Esophagus squamous epithelium (tissue), 5 donors: ENCODE measurements at regions of chr10 and their contacts with region 1.

Region 1: DNA sequence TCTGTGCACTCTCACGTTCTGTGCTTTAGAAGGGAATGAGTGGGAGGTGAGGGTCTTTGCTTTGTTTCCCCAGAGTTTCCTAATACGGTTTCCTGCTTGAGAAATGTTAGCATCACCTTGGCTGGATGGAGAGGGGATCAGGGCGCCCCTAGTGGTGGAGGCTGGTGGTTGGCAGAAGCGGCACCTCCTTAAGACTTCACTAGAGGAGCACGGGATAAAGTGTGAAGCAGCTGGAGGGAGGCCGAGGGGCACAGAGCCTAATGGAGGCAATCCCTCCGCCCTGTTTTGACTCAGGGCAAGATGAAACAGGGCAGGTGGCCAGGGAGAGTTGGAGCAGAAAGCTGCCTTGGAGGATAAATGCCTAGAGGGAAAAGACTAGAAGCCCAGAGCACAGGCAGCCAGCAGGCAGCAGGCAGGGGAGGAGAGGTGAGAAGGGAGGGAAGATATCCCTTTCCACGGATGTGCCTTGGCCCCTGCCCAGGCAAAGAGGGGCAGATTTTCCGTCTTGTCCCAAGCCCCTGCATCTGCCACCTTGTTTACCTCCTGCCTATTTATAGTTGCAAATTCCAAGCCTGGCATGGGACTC is 56.0 kb upstream of the BTRC start:
- DNase-seq: no peak
- H3K4me3 ChIP-seq: no peak overlapping the region
- H3K27ac ChIP-seq: no peak overlapping the region
- H3K4me1 ChIP-seq: peaks cover 0 to 5% (median 0%) of the 10 kb centered on the region in 3 donors
- H3K27me3 ChIP-seq: peaks cover 0 to 90% (median 4%) of the 10 kb centered on the region in 4 donors
- CTCF ChIP-seq: peak; percentile 62 to 87 (median 80)
- POLR2A ChIP-seq: no peak

Region 2: DNA sequence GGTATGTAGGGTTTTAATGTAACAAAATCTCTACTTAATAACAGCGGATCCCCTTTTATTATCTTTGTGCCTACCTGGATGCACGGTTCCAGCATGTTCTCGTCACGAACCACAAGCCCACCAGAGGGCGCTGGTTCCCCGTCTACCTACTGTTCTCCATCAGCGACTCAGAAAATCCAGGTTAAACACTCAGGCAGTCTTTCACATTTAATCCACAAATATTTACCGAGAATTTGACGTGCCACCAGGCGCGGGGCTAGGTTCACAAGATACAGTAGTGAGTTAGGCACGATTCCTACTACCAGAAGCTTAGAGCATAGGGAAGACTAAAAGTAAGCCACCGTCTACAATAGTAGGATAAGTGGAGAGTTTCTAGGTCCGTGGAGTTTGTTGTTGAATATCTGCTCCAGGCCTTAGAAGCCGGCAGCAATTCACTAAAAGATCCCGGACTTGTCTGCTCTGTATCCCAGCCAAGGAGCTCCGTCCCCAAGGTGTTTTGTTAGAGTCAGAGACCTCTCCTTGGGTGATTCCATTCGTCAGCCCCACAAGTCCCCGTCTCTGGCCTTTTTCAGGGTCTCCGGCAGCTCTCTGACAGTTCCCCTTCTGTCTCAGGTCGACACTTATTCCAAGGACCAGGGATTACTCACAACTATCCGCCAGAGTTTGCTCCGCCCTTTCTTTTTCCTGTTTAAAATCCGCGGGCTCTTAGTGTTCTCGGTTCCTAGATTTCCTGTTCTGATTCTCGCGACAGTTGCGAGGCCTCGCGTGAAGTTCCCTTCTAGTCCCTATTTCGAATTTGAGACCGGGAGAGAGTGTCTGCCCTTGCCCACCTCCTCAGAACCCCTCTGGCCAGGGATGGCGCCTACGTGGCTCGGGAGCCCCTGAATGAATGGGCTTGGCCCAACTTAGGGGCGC is 237.7 kb before region 1 on chr10:
- intact Hi-C with region 1: no loop called
- DNase-seq: peak; percentile 73
- H3K4me3 ChIP-seq: peak overlapping the region; percentile 68 to 97 (median 82)
- H3K27ac ChIP-seq: peak overlapping the region; percentile 94 to 100 (median 98)
- H3K4me1 ChIP-seq: peaks cover 26 to 49% (median 31%) of the 10 kb centered on the region in 3 donors
- H3K27me3 ChIP-seq: peaks cover 0 to 35% (median 0%) of the 10 kb centered on the region in 4 donors
- CTCF ChIP-seq: peak; percentile 80 to 90 (median 86)
- POLR2A ChIP-seq: no peak

Region 3: GRCh38 chr10:101120884-101121653 is 176.9 kb before region 1 on chr10:
- intact Hi-C with region 1: no loop called
- DNase-seq: no peak
- H3K4me3 ChIP-seq: peak overlapping the region; percentile 37 to 68 (median 56)
- H3K27ac ChIP-seq: no peak overlapping the region
- H3K4me1 ChIP-seq: peaks cover 20 to 35% (median 21%) of the 10 kb centered on the region in 3 donors
- H3K27me3 ChIP-seq: peaks cover 6 to 96% (median 46%) of the 10 kb centered on the region in 4 donors
- CTCF ChIP-seq: no peak
- POLR2A ChIP-seq: no peak

Region 4: DNA sequence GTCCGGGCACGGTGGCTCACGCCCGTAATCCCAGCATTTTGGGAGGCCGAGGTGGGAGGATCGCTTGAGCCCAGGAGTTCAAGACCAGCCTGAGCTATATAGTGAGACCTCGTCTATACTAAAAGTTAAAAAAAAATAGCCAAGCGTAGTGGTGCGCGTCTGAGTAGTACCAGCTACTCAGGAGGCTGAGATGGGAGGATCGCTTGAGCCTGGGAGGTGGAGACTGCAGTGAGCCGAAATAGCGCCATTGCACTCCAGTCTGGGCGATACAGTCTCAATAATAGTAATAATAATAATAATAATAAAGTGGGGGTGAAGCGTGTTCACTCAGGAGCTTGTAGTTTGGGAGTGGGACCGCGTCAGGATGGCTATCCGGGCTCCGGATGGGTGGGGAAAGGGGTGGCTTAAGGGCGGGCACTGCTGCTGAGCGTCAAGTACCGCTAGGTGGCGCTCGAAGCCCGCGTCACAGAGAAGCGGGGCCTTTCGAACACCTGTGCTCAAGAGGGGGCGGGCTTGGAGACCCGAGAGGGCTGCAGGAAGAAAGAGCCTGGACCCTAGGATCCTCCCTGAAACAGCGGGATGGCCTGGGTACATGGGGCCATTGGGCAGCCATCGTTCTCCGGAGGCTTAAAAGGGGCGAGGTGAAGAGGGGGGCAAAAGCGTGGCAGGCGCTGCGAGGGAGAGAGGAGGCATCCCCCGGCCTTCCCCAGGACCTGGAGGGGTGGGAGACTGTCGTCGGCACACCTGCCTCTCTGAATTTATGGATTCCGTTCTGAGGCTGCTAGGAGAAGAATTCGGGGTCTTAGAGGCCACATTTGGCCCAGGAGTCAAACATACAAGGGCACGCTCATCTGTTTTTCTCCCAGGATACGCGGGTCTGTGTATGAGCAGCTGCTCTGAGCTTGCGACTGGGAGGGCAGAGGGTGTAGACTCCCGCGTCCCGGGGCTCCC is 83.3 kb before region 1 on chr10:
- intact Hi-C with region 1: no loop called
- DNase-seq: no peak
- H3K4me3 ChIP-seq: peak overlapping the region in 1 of 4 donors; percentile 21
- H3K27ac ChIP-seq: no peak overlapping the region
- H3K4me1 ChIP-seq: peaks cover 25 to 56% (median 43%) of the 10 kb centered on the region in 3 donors
- H3K27me3 ChIP-seq: peaks cover 43 to 100% (median 60%) of the 10 kb centered on the region in 4 donors
- CTCF ChIP-seq: peak; percentile 73 to 86 (median 78)
- POLR2A ChIP-seq: no peak

Region 5: DNA sequence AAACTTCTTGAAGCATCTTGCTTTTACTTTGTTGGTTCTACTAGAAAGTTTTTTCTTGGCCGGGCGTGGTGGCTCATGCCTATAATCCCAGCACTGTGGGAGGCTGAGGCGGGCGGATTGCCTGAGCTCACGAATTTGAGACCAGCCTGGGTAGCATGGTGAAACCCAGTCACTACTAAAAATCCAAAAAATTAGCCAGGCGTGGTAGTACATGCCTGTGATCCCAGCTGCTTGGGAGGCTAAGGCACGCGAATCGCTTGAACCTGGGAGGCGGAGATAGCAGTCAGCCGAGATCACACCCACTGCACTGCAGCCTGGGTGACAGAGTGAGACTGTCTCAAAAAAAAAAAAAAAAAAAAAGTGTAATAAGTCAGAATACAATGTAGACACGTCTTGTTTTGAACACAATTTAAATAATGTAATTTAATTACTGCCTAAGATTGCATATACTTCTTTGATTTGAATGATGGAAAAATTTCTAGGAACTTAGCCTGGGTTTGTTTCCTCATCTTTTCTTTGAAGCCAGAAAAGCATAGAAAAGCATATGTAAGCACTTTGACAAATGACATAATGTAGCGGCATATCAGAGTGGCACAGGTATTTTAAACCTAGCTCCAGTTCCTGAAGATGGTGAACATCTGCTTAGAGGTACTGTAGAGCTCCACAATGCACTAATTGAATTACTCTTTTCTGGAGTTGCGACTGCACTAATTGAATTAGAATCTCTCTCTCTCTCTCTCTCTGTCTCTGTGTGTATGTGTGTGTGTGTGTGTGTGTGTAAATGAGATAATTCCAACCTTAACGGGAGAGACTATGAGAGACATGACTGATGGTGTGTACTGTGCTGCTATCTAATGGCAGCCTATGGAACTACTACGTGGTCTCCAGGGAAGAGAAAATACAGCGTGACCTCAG is 143.8 kb after region 1 on chr10:
- intact Hi-C with region 1: loop called (anchors 5 kb)
- DNase-seq: no peak
- H3K4me3 ChIP-seq: no peak overlapping the region
- H3K27ac ChIP-seq: no peak overlapping the region
- H3K4me1 ChIP-seq: peaks cover 0 to 29% (median 3%) of the 10 kb centered on the region in 3 donors
- H3K27me3 ChIP-seq: no peaks in the 10 kb centered on the region
- CTCF ChIP-seq: peak in 5 of 6 experiments; percentile 41 to 76 (median 49)
- POLR2A ChIP-seq: no peak

Region 6: DNA sequence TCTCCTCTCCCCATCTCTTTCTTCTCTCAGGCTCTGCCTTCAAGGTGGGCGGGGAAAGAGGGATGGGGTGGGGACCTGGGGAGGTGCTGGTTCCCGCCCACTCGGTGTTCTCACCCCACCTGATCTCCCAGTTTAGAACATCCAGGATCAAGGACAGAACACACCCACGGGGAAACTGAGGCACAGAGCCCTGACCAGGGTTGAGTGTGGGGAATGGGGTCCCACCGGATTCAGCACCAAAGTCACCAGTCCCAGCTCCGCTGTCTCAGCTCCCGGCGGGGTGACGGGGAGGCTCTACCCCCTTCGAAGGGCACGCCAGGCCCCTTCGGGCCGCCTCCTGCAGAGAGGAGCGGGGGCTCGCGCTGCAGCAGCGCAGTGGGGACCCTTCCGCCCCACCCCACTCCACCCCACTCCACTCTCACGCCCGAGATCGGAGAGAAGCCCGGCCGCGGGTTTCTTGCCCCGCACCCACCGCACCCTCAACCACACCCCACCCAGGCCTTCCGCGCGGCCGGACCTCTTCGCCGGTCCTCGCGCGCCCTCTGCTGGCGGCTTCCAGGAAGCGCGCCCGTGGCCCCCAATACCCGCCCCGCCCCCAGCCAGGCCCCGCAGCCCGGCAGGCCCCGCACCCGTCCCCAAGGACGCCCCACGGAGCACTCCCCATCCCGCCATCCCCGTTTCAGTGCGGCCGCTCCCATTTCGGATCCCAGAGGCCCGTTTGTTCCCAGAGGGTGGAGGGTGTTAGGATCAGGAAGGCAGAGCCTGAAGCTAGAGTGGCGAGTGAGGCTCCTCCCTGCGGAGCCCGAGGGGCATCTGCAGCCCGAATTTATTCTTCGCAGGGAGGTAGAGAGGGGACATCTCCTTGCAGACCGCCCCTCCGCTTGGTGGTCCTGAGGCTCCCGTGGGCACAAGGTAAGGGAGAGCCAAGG is 272.1 kb after region 1 on chr10:
- intact Hi-C with region 1: loop called (anchors 10 kb)
- DNase-seq: no peak
- H3K4me3 ChIP-seq: peak overlapping the region; percentile 45 to 74 (median 66)
- H3K27ac ChIP-seq: peak overlapping the region in 3 of 4 donors; percentile 61 to 74 (median 66)
- H3K4me1 ChIP-seq: peaks cover 19 to 32% (median 22%) of the 10 kb centered on the region in 3 donors
- H3K27me3 ChIP-seq: peaks cover 4 to 63% (median 15%) of the 10 kb centered on the region in 4 donors
- CTCF ChIP-seq: peak; percentile 79 to 96 (median 85)
- POLR2A ChIP-seq: no peak